ENCODE measurements at regions of chr21 and their contacts with region 1.

Region 1: DNA sequence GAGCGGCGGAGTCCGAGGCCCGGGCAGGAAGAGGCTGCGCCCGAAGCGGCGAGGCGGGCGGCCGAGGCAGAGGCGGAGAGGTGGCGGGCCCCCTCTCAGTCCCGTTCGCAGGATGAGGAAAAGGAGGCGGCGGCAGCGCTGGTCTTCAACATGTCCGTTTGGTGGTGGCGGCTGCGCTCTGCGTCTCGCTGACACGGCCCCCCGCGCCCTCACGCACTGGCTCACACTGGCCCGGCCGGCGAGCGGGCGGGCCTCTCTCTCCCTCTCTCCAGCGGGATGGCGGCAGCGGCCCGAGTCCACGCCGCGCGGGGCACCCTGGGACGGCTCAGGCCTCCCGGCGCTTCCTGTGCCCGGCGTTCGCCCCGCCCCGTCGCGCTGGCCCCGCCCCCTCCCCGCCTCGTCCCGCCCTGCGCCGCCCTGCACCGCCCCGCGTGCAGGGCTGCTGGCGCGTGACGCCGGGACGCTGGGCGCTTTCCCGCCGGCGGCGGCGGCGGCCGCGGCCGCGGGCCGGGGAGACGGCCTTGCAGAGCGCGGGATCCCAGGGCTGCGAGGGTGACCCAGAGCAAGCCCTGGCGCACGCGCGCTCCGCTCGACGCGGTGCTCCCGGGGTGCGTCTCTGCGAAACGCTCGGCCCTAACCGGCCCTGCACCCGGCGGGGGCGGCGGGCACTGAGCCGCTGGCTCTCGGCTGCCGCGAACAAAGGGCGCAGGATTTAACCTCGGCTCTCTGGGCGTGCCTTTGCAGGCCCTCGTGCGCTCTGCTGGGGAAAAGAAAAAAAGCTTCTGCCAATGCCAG is at the start of gene SCAF4:
- DNase-seq: peak; percentile 60 to 93
- H3K4me3 ChIP-seq: peak within 1 kb of the TSS; percentile 93 to 99
- H3K27ac ChIP-seq: peak within 1 kb of the TSS; percentile 96 to 98
- H3K4me1 ChIP-seq: peaks cover 4 to 31% of the 10 kb centered on the region in 2 donors
- H3K27me3 ChIP-seq: no peaks in the 10 kb centered on the region
- CTCF ChIP-seq: no peak
- total RNA-seq, gene SCAF4: 31.2 TPM

Region 2: DNA sequence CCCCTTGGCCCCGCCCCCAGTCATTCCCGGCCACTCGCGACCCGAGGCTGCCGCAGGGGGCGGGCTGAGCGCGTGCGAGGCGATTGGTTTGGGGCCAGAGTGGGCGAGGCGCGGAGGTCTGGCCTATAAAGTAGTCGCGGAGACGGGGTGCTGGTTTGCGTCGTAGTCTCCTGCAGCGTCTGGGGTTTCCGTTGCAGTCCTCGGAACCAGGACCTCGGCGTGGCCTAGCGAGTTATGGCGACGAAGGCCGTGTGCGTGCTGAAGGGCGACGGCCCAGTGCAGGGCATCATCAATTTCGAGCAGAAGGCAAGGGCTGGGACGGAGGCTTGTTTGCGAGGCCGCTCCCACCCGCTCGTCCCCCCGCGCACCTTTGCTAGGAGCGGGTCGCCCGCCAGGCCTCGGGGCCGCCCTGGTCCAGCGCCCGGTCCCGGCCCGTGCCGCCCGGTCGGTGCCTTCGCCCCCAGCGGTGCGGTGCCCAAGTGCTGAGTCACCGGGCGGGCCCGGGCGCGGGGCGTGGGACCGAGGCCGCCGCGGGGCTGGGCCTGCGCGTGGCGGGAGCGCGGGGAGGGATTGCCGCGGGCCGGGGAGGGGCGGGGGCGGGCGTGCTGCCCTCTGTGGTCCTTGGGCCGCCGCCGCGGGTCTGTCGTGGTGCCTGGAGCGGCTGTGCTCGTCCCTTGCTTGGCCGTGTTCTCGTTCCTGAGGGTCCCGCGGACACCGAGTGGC is 72.3 kb before region 1 on chr21 and contains the start of gene SOD1:
- intact Hi-C with region 1: loop called (anchors 1 kb)
- DNase-seq: peak; percentile 82 to 97
- H3K4me3 ChIP-seq: peak within 1 kb of the TSS; percentile 73 to 76
- H3K27ac ChIP-seq: peak within 1 kb of the TSS; percentile 89 to 90
- H3K4me1 ChIP-seq: peaks cover 0 to 28% of the 10 kb centered on the region in 2 donors
- H3K27me3 ChIP-seq: no peaks in the 10 kb centered on the region
- CTCF ChIP-seq: no peak
- total RNA-seq, gene SOD1: 87.7 TPM

Region 3: DNA sequence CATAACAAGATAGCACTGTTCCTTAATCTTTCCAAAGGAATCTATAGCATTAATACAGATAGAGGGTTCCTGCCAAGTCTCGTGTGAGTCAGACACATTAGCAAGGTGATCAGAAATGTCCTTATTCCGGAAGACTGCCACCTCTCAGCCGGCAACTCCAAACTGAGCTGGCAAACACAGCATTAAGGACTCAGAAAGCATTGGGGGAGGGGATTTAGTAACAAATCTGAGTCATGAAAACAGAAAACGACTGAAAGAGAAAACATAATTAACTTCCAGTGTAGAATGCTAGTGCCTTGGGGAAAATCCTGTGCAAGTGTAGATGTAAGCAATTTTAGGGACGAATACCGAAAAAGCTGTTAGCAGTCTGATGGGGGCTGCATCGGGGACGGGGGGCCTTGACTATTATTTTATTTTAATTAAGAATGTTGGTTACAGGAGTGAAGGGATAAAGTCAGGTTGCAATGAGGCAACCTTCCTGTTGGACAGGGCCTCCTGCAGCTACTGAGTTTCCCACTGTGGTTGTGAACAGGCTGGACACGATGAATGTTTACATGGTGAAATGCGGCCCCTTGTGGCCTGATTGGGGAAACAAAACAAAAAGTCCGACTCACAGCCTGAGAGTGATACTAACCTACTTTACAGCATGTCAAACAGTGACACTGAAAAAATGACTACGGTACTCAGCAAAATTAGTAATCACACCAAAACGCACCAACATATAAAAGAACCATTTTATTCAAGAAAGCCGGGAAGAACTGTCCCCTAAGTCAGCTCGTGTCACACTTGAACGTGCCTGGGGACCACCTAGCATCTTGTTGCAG is 526.2 kb after region 1 on chr21:
- intact Hi-C with region 1: loop called (anchors 5 kb)
- DNase-seq: peak in 1 of 2 donors; percentile 85
- H3K4me3 ChIP-seq: no peak overlapping the region
- H3K27ac ChIP-seq: peak overlapping the region in 1 of 2 donors; percentile 57
- H3K4me1 ChIP-seq: peaks cover 5 to 29% of the 10 kb centered on the region in 2 donors
- H3K27me3 ChIP-seq: no peaks in the 10 kb centered on the region
- CTCF ChIP-seq: peak; percentile 62 to 76 (median 71)

Region 4: DNA sequence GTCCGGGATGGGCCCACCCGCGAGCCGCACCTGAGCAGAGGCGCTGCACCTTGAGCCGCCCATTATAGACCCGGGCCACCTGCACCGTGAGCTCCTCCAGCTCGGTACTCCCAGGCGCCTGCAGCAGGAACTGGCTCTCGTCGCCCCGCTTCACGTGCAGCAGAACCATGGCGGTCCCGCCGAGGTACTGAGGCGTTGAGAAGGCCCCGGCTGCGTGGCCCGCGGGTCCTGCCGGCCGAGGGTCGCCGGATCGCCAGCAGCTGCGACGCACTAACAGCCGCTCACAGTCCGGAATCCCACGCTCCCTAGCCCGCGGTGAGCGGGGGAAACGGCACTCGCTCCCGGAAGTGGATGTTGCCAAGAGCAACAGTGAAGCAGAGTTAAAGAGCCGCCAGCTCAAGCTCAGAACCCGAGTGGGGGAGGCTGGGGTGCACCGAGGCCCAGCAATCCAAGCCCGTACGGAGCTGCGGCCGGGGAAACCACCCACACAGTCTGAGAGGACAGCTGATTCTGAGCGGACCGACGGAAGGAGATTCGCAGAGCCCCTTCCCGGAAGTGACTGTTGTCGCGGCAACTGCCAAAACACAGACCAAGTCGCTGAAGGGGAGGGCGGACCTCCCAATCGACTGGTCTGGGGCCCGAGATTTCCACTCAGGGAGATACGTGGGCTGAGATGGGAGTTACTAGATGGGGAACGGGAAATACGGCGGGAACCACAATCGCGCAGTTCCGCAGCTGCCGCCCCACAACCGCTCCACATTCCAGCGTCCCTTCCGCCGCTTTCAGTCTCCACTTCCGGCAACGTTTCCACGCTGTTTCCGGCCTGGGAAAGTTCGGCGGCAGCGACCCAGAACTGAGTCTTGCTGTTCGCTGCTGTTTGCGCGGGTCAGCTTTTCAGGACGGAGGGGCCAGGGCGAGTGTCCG is 880.3 kb after region 1 on chr21 and contains the start of gene CFAP298:
- intact Hi-C with region 1: loop called (anchors 5 kb)
- DNase-seq: peak; percentile 37 to 93
- H3K4me3 ChIP-seq: peak within 1 kb of the TSS; percentile 73 to 83
- H3K27ac ChIP-seq: peak within 1 kb of the TSS; percentile 83 to 86
- H3K4me1 ChIP-seq: peaks cover 0 to 11% of the 10 kb centered on the region in 2 donors
- H3K27me3 ChIP-seq: no peaks in the 10 kb centered on the region
- CTCF ChIP-seq: no peak
- total RNA-seq, gene CFAP298: 18.3 TPM

Measured in ascending aorta (tissue), 2 donors.